ENCODE measurements at regions of chr3 and their contacts with region 1.

Region 1: DNA sequence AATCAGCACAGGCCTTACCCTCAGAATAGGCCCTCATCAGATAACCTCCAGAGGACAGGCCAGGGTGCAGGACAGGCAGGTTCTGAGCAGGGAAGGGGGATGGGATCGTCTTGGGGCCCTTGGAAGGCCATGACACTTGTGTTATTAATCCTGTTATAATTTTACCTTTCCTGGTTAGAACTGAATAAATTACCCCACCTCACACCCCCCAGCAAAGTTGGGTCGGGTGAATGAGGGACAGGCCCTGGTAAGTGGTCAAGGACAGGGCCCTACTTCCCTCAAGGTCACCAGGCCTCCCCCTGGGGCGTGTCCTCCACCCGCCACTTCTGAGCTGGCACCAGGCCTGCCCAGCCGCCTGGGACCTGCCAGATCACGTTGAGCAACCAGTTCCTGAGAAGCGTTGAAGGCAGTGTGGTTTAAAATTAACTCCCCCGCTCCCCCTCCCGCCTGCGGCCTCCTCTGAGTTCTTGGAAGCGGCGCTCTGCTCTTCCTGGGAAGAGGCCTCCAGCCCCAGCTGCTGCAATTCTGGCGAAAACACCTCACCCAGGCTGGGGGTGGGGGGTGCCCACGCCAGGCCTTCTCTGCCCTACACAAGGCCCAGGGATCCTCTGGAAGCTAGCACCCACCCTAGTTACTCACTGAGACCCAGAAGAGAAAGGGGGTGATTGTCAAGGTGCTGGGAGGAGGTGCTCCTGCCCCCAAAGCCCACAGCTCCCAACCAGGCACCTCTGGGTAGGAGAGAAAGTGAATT is 10.6 kb downstream of the CISH start:
- DNase-seq: no peak
- ATAC-seq: peak; percentile 61
- H3K4me3 Mint-ChIP-seq: peak overlapping the region; percentile 41
- H3K27ac Mint-ChIP-seq: peak overlapping the region; percentile 41
- H3K4me1 Mint-ChIP-seq: peaks cover 40% of the 10 kb centered on the region
- H3K27me3 Mint-ChIP-seq: no peaks in the 10 kb centered on the region
- CTCF ChIP-seq: no peak

Region 2: DNA sequence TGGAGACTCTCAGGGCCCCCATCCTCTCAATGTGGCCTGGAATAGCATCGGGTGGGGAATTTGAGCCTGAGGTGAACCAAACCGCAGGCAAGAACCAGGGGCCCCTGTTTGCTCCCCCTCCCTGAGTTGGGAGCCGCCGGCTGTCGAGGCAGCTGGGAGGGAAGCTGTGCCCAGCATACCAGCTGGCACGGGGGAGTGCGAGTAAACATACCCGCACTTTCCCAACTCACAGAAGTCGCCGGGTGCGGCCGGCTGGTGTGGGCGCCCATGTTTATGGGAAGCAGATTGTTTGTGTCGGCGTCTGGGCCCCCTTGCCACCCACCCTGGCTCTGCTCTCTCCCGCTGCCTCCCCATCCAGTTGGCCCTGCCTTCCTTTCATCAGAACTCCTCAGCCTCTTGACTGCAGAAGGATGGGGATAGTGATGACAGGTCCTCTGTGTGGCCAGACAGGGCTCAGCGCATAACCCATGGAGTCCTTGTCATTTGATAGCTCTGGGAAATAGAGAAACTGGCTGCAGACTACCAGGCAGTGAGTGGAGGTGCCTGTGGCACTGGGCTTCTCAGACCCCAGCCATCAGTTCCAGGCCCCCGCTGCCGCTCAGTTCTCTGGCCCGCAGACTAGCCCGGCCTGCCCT is 158.0 kb before region 1 on chr3:
- CTCF ChIA-PET with region 1: no interaction called
- POLR2A ChIA-PET with region 1: no interaction called
- intact Hi-C with region 1: no loop called
- DNase-seq: no peak
- ATAC-seq: no peak
- H3K4me3 Mint-ChIP-seq: no peak overlapping the region
- H3K27ac Mint-ChIP-seq: no peak overlapping the region
- H3K4me1 Mint-ChIP-seq: no peaks in the 10 kb centered on the region
- H3K27me3 Mint-ChIP-seq: no peaks in the 10 kb centered on the region
- CTCF ChIP-seq: no peak

Region 3: DNA sequence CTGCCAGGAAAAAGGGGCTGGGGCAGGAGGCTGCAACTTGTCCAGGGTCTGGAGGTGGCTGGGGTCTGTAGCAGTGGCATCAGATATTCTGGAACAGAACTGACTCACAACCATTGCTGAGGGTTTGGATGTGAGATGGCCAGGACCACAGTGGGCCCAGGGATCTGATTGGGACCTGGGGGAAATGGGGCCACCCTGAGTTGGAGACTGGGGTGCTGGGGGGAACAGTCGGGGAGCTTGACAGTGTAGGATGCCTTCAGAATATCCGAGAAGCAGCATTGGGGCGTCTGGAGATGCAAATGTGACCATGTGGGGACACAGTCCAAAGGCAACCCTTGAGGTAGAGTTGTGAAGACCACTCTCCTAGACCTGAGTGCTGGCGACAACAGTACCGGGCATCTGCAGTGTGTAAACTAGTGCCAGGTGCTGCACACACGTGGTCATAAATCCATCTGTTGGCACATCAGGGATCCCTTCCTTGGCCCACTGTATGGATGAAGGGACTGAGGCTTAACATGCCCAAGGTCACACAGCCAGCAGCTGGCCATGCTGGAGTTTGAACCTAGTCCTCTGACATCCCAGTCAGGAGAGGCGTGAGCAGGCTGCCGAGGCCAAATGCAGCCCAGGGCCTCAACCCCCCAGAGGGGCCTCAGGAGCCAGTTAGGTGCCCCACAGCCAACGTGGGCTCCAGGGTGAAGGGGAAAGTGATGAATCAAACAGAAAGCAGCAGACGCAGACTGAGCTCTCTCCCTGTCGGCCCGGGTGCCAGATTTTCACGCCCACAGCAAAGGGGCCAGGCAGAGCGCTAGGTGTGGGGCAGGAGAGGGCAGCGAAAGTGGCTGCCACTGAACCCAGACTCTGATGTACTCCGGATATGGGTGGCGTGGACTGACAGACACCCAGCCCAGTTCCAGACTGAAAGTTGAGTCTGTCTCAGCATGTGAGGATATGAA is 12.9 kb before region 1 on chr3:
- CTCF ChIA-PET with region 1: interaction called, 6 read pairs
- POLR2A ChIA-PET with region 1: interaction called, 15 read pairs
- intact Hi-C with region 1: loop called (anchors 1 kb)
- DNase-seq: no peak
- ATAC-seq: peak; percentile 6
- H3K4me3 Mint-ChIP-seq: no peak overlapping the region
- H3K27ac Mint-ChIP-seq: peak overlapping the region; percentile 63
- H3K4me1 Mint-ChIP-seq: peaks cover 34% of the 10 kb centered on the region
- H3K27me3 Mint-ChIP-seq: no peaks in the 10 kb centered on the region
- CTCF ChIP-seq: no peak

Region 4: DNA sequence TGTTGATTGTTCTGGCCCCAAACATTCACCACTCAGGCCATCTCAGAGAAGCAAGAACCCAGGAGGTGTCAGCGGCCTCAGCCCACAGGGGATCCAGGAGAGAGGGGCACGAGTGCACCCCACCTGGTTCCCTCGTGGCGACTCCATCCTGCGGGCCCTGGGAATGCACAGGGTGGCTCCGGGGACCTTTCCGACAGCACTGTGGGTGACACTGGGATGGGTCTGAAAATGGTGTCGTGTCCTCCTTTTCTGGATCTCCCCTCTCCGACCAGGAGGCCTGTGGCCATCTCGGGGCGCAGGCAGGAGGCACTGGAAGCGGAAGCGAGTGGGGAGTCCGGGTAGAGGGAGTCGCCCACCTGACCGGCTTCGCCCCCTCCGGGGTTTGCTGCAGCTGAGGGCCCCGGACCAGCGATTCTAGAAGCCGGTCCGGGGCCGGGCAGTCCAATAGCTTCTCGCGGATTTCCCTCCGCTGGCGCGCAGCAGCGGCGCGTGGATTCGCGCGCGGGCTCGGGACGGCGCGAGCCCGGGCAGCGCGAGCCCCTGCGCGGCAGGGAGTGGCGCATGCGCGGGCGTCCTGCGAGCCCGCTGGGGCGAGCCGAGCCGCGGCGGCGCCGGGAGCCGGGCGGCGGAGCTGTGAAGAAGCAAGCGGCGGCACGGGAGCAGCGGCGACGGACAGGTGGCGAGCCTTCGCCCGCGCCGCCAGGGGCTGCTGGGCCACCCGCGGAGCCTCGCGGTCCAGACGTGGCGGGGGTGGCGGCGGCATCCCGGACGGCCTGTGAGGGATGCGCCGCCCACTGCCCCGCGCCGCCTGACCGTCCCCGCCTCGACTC is 73.5 kb after region 1 on chr3 and contains the start of gene DOCK3:
- CTCF ChIA-PET with region 1: no interaction called
- POLR2A ChIA-PET with region 1: interaction called, 10 read pairs
- intact Hi-C with region 1: no loop called
- DNase-seq: peak; percentile 55
- ATAC-seq: peak; percentile 90
- H3K4me3 Mint-ChIP-seq: peak within 1 kb of the TSS; percentile 67
- H3K27ac Mint-ChIP-seq: no peak within 1 kb of the TSS
- H3K4me1 Mint-ChIP-seq: peaks cover 6% of the 10 kb centered on the region
- H3K27me3 Mint-ChIP-seq: peaks cover 39% of the 10 kb centered on the region
- CTCF ChIP-seq: no peak
- total RNA-seq, gene DOCK3: 0.04 and 0.07 TPM in 2 replicates

Measured in activated B cell treated with CpG ODN at 0.5 μM for 24 hours (primary cell).